GM12878 (cell line): ENCODE measurements at regions of chr4 and their contacts with region 1.

Region 1: GRCh38 chr4:121252224-121252806 is 88.2 kb upstream of the TNIP3 start:
- DNase-seq: no peak
- ATAC-seq: peak; percentile 54
- H3K4me3 ChIP-seq: no peak overlapping the region
- H3K27ac ChIP-seq: no peak overlapping the region
- H3K4me1 ChIP-seq: peaks cover 7% of the 10 kb centered on the region
- H3K27me3 ChIP-seq: no peaks in the 10 kb centered on the region
- CTCF ChIP-seq: peak; percentile 77 to 81 (median 81)
- EP300 ChIP-seq: no peak
- POLR2A ChIP-seq: no peak
- RAD21 ChIP-seq: peak; percentile 77

Region 2: GRCh38 chr4:121185960-121186359 is 66.4 kb before region 1 on chr4:
- CTCF ChIA-PET with region 1: interaction called, 225 read pairs
- POLR2A ChIA-PET with region 1: no interaction called
- RAD21 ChIA-PET with region 1: interaction called, 53 read pairs
- SMC1A ChIA-PET with region 1: interaction called, 121 read pairs
- in situ Hi-C with region 1: loop called (anchors 5 kb)
- intact Hi-C with region 1: no loop called
- DNase-seq: peak; percentile 21
- ATAC-seq: peak; percentile 73
- H3K4me3 ChIP-seq: no peak overlapping the region
- H3K27ac ChIP-seq: no peak overlapping the region
- H3K4me1 ChIP-seq: peaks cover 7% of the 10 kb centered on the region
- H3K27me3 ChIP-seq: no peaks in the 10 kb centered on the region
- CTCF ChIP-seq: no peak
- EP300 ChIP-seq: no peak
- POLR2A ChIP-seq: no peak
- RAD21 ChIP-seq: no peak

Region 3: GRCh38 chr4:121199742-121200561 is 52.4 kb before region 1 on chr4:
- CTCF ChIA-PET with region 1: interaction called, 64 read pairs
- POLR2A ChIA-PET with region 1: no interaction called
- RAD21 ChIA-PET with region 1: interaction called, 19 read pairs
- SMC1A ChIA-PET with region 1: interaction called, 49 read pairs
- in situ Hi-C with region 1: no loop called
- intact Hi-C with region 1: loop called (anchors 1 kb)
- DNase-seq: peak; percentile 81
- ATAC-seq: peak; percentile 90
- H3K4me3 ChIP-seq: peak overlapping the region; percentile 24; the same call in 1 of the 2 replicates
- H3K27ac ChIP-seq: peak overlapping the region; percentile 76
- H3K4me1 ChIP-seq: peaks cover 20% of the 10 kb centered on the region
- H3K27me3 ChIP-seq: no peaks in the 10 kb centered on the region
- CTCF ChIP-seq: peak; percentile 19 to 33 (median 30); a peak in 4 of 6 replicates
- EP300 ChIP-seq: peak in 1 of 2 experiments; percentile 30; a peak in 1 of 4 replicates
- POLR2A ChIP-seq: no peak
- RAD21 ChIP-seq: peak; percentile 30; the same call in 1 of the 2 replicates

Region 4: GRCh38 chr4:121219227-121219626 is 33.1 kb before region 1 on chr4:
- CTCF ChIA-PET with region 1: interaction called, 10 read pairs
- POLR2A ChIA-PET with region 1: no interaction called
- RAD21 ChIA-PET with region 1: no interaction called
- SMC1A ChIA-PET with region 1: no interaction called
- in situ Hi-C with region 1: no loop called
- intact Hi-C with region 1: no loop called
- DNase-seq: no peak
- ATAC-seq: no peak
- H3K4me3 ChIP-seq: no peak overlapping the region
- H3K27ac ChIP-seq: no peak overlapping the region
- H3K4me1 ChIP-seq: no peaks in the 10 kb centered on the region
- H3K27me3 ChIP-seq: no peaks in the 10 kb centered on the region
- CTCF ChIP-seq: no peak
- EP300 ChIP-seq: no peak
- POLR2A ChIP-seq: no peak
- RAD21 ChIP-seq: no peak

Region 5: DNA sequence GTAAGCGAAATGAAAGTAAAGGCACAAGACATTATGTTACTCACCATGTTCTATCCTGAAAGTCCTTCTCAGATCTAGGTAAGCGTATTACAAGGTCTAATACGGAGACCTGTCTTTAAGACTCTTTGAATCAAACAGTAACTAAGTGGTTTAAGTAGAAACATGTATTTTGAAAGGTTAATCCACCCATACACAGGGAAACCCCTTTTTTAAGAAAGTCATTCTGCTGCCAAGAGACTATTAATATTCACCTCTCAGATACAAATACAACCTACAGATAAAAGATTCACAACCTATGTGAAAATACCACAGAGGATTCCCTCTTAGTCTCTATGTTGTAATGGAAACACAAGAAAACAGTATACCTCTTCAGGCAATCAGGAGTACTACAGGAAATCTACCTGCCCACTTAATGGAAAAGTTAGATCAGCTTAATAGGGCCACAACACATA is 24.9 kb before region 1 on chr4:
- CTCF ChIA-PET with region 1: interaction called, 14 read pairs
- POLR2A ChIA-PET with region 1: no interaction called
- RAD21 ChIA-PET with region 1: no interaction called
- SMC1A ChIA-PET with region 1: interaction called, 3 read pairs
- in situ Hi-C with region 1: no loop called
- intact Hi-C with region 1: no loop called
- DNase-seq: peak; percentile 24
- ATAC-seq: peak; percentile 90
- H3K4me3 ChIP-seq: no peak overlapping the region
- H3K27ac ChIP-seq: no peak overlapping the region; the same call in 1 of the 2 replicates
- H3K4me1 ChIP-seq: no peaks in the 10 kb centered on the region
- H3K27me3 ChIP-seq: no peaks in the 10 kb centered on the region
- CTCF ChIP-seq: 0 out of 6 replicates have a peak, but pooled peaks of 1 of the 3 experiments have one; percentile 17
- EP300 ChIP-seq: no peak
- POLR2A ChIP-seq: no peak
- RAD21 ChIP-seq: no peak

Region 6: DNA sequence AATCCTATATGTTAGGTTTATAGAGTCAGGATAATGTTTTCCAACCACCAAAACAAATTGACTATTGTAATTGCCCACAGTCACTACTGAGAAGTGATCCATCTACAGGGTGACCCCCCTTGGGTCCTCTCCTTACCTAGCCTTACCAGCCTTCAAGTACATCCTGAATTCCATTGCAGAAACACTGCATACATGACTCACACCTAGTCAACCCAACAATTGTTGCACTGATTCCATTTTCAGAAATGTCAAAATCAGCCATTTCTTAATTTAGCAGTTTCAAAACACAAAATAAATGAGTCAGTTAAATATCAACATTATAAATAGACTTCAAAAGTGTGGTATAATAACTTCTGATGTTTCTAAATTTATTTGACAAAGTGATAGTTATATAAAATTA is 18.1 kb after region 1 on chr4:
- CTCF ChIA-PET with region 1: no interaction called
- POLR2A ChIA-PET with region 1: no interaction called
- RAD21 ChIA-PET with region 1: no interaction called
- SMC1A ChIA-PET with region 1: no interaction called
- in situ Hi-C with region 1: no loop called
- intact Hi-C with region 1: no loop called
- DNase-seq: no peak
- ATAC-seq: no peak
- H3K4me3 ChIP-seq: no peak overlapping the region
- H3K27ac ChIP-seq: no peak overlapping the region
- H3K4me1 ChIP-seq: no peaks in the 10 kb centered on the region
- H3K27me3 ChIP-seq: no peaks in the 10 kb centered on the region
- CTCF ChIP-seq: no peak
- EP300 ChIP-seq: no peak
- POLR2A ChIP-seq: no peak
- RAD21 ChIP-seq: no peak